ENCODE measurements at regions of chr5 and their contacts with region 1.

Region 1: DNA sequence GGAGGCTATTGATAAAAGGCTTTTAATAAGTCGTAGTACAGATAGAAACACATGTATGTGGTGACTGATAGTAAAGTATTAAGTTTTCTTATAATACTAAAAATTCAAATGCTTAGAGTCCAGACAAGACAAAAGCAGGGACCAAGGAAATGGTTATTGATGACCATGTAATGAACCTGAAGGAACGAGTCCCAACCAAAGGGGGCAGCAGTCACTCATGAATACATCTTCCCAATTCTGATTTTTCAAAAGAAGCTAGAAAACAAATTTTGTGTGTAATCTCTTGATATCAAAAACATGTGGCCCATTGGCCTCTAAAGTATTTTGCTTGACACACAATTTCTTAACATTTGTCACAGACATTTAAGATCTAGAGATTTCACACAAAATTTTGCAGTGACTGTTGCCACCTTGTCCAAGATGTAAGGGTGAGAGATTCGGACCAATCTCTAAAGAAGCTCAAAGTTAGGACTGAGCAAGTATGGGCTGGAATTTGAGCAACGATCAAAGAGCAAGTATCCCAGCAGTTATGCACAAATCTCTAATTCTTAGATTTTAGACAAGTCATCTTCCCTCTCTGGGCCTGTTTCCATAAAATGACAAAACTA is 66.8 kb downstream of the ARL15 start:
- DNase-seq: peak; percentile 43
- ATAC-seq: no peak
- H3K4me3 ChIP-seq: no peak overlapping the region
- H3K4me3 Mint-ChIP-seq: no peak overlapping the region
- H3K27ac ChIP-seq: no peak overlapping the region
- H3K27ac Mint-ChIP-seq: no peak overlapping the region
- H3K4me1 ChIP-seq: no peaks in the 10 kb centered on the region
- H3K4me1 Mint-ChIP-seq: peaks cover 2% of the 10 kb centered on the region
- H3K27me3 ChIP-seq: no peaks in the 10 kb centered on the region
- H3K27me3 Mint-ChIP-seq: no peaks in the 10 kb centered on the region
- CTCF ChIP-seq: peak; percentile 71

Region 2: DNA sequence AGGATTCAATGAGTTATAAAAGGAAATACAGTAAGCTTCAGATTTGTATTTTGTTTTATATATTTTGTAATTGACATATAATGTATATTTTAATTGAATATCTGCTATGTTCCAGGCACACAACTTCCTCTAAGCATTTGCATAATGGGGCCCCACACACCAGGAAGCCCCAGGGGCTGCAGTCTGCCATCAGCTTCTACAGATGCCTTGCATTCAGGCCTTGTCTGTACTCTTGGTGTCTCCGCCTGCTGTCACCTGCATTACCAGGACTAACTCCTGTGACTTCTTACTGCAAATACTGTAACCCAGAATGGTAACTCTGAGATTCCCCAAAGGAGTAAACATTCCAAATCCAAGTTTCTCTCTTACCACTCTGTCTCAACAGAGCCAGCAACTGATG is 46.2 kb after region 1 on chr5:
- CTCF ChIA-PET with region 1: no interaction called
- POLR2A ChIA-PET with region 1: no interaction called
- intact Hi-C with region 1: loop called (anchors 1 kb)
- DNase-seq: no peak
- ATAC-seq: peak; percentile 28
- H3K4me3 ChIP-seq: no peak overlapping the region
- H3K4me3 Mint-ChIP-seq: peak overlapping the region; percentile 21
- H3K27ac ChIP-seq: no peak overlapping the region
- H3K27ac Mint-ChIP-seq: no peak overlapping the region
- H3K4me1 ChIP-seq: peaks cover 4 to 8% of the 10 kb centered on the region in 2 donors
- H3K4me1 Mint-ChIP-seq: peaks cover 35% of the 10 kb centered on the region
- H3K27me3 ChIP-seq: no peaks in the 10 kb centered on the region
- H3K27me3 Mint-ChIP-seq: no peaks in the 10 kb centered on the region
- CTCF ChIP-seq: no peak

Region 3: DNA sequence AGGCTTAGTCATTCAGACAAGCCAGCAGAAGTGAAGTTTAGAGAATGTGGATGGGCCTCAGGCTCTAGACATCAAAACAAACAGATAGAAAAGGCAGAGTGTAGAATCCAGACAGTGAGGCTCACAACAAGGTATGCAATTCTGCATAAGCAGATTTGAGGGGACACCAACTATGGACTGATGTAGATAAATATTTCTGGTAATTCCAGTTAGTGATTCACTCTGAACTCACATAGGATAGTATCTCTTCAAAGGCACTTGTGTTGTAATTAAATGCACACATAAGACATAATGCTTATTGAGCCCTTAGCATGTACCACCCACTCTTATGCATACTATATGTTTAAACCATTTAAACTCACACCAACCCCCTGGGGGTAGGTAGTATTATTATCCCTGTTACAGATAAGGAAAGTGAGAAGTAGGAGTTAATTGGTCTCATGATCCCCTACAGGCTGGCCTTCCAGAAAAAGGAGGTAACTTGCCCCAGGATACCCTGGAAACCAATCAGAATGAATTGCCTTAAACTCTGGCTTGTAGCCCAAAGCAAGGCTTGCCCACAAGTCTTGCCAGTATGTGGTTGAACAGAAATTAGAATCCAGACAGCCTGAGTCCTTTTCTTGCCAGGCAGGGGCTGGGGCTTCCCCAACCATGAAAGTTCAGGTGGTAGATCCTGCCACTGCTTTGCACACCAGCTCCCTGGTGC is 172.5 kb after region 1 on chr5:
- CTCF ChIA-PET with region 1: interaction called, 30 read pairs
- POLR2A ChIA-PET with region 1: no interaction called
- intact Hi-C with region 1: loop called (anchors 1 kb)
- DNase-seq: no peak
- ATAC-seq: no peak
- H3K4me3 ChIP-seq: no peak overlapping the region
- H3K4me3 Mint-ChIP-seq: no peak overlapping the region
- H3K27ac ChIP-seq: no peak overlapping the region
- H3K27ac Mint-ChIP-seq: no peak overlapping the region
- H3K4me1 ChIP-seq: no peaks in the 10 kb centered on the region
- H3K4me1 Mint-ChIP-seq: no peaks in the 10 kb centered on the region
- H3K27me3 ChIP-seq: peaks cover 0 to 4% (median 0%) of the 10 kb centered on the region in 4 experiments
- H3K27me3 Mint-ChIP-seq: peaks cover 27% of the 10 kb centered on the region
- CTCF ChIP-seq: no peak

Region 4: GRCh38 chr5:54421976-54422375 is 178.4 kb after region 1 on chr5:
- CTCF ChIA-PET with region 1: interaction called, 30 read pairs
- POLR2A ChIA-PET with region 1: no interaction called
- intact Hi-C with region 1: loop called (anchors 1 kb)
- DNase-seq: no peak
- ATAC-seq: no peak
- H3K4me3 ChIP-seq: no peak overlapping the region
- H3K4me3 Mint-ChIP-seq: no peak overlapping the region
- H3K27ac ChIP-seq: no peak overlapping the region
- H3K27ac Mint-ChIP-seq: no peak overlapping the region
- H3K4me1 ChIP-seq: no peaks in the 10 kb centered on the region
- H3K4me1 Mint-ChIP-seq: no peaks in the 10 kb centered on the region
- H3K27me3 ChIP-seq: peaks cover 0 to 5% (median 0%) of the 10 kb centered on the region in 4 experiments
- H3K27me3 Mint-ChIP-seq: peaks cover 27% of the 10 kb centered on the region
- CTCF ChIP-seq: no peak

Measured in B cell (primary cell).